Pancreas (tissue), 10 donors: ENCODE measurements at regions of chr5 and their contacts with region 1.

Region 1: GRCh38 chr5:33439905-33440481 is 772 bp upstream of the TARS1 start:
- DNase-seq: no peak
- ATAC-seq: peak in 2 of 4 donors; percentile 21 to 52
- H3K4me3 ChIP-seq: peak overlapping the region; percentile 50 to 72 (median 54)
- H3K27ac ChIP-seq: peak overlapping the region; percentile 67 to 86 (median 86)
- H3K4me1 ChIP-seq: peaks cover 10 to 29% (median 12%) of the 10 kb centered on the region in 3 donors
- H3K27me3 ChIP-seq: no peaks in the 10 kb centered on the region
- CTCF ChIP-seq: no peak

Region 2: GRCh38 chr5:33509036-33509435 is 69.0 kb after region 1 on chr5:
- intact Hi-C with region 1: no loop called
- DNase-seq: no peak
- ATAC-seq: no peak
- H3K4me3 ChIP-seq: no peak overlapping the region
- H3K27ac ChIP-seq: no peak overlapping the region
- H3K4me1 ChIP-seq: no peaks in the 10 kb centered on the region
- H3K27me3 ChIP-seq: no peaks in the 10 kb centered on the region
- CTCF ChIP-seq: no peak

Region 3: GRCh38 chr5:33576726-33577590 is 137.0 kb after region 1 on chr5:
- intact Hi-C with region 1: no loop called
- DNase-seq: no peak
- ATAC-seq: no peak
- H3K4me3 ChIP-seq: no peak overlapping the region
- H3K27ac ChIP-seq: no peak overlapping the region
- H3K4me1 ChIP-seq: no peaks in the 10 kb centered on the region
- H3K27me3 ChIP-seq: no peaks in the 10 kb centered on the region
- CTCF ChIP-seq: no peak

Region 4: GRCh38 chr5:33936004-33936380 is 496.0 kb after region 1 on chr5:
- intact Hi-C with region 1: loop called in 1 of 3 experiments (anchors 10 kb)
- DNase-seq: peak; percentile 33 to 88 (median 60)
- ATAC-seq: peak; percentile 93 to 96 (median 96)
- H3K4me3 ChIP-seq: peak overlapping the region in 2 of 4 donors; percentile 16 to 41
- H3K27ac ChIP-seq: no peak overlapping the region
- H3K4me1 ChIP-seq: no peaks in the 10 kb centered on the region
- H3K27me3 ChIP-seq: peaks cover 0 to 23% (median 7%) of the 10 kb centered on the region in 4 donors
- CTCF ChIP-seq: peak in 2 of 4 donors; percentile 5 to 27

Region 5: GRCh38 chr5:33969572-33970452 is 529.8 kb after region 1 on chr5:
- intact Hi-C with region 1: loop called in 1 of 3 experiments (anchors 10 kb)
- DNase-seq: peak in 3 of 6 donors; percentile 6 to 49 (median 21)
- ATAC-seq: peak; percentile 68 to 92 (median 89)
- H3K4me3 ChIP-seq: no peak overlapping the region
- H3K27ac ChIP-seq: no peak overlapping the region
- H3K4me1 ChIP-seq: no peaks in the 10 kb centered on the region
- H3K27me3 ChIP-seq: no peaks in the 10 kb centered on the region
- CTCF ChIP-seq: peak; percentile 19 to 61 (median 40)